Common myeloid progenitor, CD34-positive (primary cell): ENCODE measurements at regions of chr22 and their contacts with region 1.

Region 1: DNA sequence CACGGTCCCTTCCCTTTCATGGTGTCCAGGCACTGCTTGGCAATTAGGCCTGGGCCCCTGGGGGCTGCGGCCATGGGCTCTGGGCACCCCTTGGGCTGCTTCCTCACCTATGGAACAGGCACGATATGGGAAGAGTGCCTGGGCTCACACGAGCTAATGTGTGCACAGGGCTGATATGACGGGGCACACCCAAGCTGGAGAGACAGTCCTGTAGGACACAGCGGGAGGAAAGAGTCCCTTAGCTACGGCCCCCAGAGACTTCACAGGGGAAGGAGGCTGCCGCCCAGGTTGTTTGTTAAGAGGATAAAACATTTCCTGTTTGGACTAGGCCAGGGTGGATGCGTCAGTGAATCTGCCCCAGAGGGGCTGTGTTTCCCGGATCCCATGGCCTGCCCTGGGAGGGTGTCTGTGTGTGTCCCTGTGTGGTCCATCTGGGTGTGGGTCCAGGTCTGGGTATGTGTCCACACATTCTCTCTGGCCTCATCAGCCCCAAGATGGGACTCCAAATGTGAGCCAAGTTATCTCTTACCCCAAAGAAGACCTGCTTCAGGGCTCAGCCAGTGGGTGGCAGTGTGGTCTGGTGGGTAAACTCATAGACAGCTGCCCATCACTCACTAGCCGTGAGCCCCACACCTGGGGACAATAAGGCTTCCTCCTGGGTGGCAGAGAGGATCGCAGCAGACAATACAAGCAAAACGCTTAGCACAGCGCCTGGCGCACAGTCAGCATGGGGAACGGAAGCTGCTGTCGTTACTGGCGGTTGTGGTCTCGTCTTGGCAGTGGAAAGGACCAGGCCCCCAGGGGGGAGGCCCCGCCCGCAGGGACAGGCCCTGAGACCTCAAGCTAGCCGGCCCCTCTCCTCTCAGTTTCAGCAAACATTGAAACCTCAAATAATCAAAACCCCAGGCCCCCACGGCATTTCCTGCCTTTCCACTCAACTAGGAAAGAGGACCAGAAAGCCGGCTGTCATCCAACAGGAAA is 3.2 kb upstream of the EMID1 start:
- DNase-seq: peak; percentile 88 to 97 (median 96)
- H3K4me3 ChIP-seq: peak overlapping the region in 4 of 7 experiments; percentile 34 to 59 (median 44)
- H3K27ac ChIP-seq: peak overlapping the region; percentile 64 to 86
- H3K4me1 ChIP-seq: peaks cover 0 to 74% (median 70%) of the 10 kb centered on the region in 4 experiments
- H3K27me3 ChIP-seq: no peaks in the 10 kb centered on the region

Region 2: GRCh38 chr22:29167032-29167911 is 35.2 kb before region 1 on chr22:
- CTCF ChIA-PET with region 1: interaction called, 17 read pairs
- POLR2A ChIA-PET with region 1: interaction called, 11 read pairs
- DNase-seq: peak; percentile 94 to 99 (median 98)
- H3K4me3 ChIP-seq: peak overlapping the region in 3 of 7 experiments; percentile 6 to 39 (median 22)
- H3K27ac ChIP-seq: peak overlapping the region in 1 of 2 experiments; percentile 6
- H3K4me1 ChIP-seq: peaks cover 4 to 34% (median 28%) of the 10 kb centered on the region in 4 experiments
- H3K27me3 ChIP-seq: no peaks in the 10 kb centered on the region

Region 3: DNA sequence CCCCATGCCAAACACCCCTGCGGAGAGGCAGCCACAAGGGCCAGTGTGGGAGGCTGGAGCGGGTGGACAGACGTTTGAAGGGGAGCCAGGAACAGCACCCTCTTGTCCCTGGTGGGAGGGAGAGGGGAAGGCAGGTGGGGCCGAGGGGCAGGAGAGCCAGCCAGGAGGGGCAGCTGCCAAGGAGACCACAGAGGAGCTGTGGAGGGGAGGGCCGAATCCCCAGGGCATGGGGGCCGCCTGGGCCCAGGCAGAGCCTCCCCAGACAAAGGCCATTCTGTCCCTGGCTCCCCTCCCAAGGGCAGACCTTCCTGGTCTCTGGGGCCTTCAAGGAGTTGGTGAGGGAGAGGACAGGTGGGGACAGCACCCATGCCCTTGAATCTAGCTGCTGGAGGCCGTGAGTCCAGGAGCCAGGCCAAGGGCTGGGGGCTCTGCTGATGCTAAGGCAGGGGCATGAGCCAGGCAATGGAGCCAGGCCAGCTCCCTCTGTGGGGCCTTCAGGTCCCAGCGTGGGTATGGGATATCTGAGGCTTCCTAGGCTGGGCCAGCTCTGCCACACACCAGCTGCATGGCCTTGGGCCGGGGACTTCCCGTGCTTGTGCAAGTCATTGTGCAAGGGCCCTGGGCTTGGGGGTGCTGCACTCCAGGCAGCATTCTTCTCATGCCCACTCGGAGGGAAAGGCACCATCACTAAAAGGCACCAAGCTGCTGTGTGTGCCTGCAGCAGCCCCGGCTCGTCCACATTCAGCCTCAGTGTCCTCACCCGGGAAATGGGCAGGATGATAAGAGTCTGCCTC is 14.6 kb after region 1 on chr22:
- CTCF ChIA-PET with region 1: interaction called, 52 read pairs
- POLR2A ChIA-PET with region 1: interaction called, 3 read pairs
- DNase-seq: peak in 2 of 3 donors; percentile 89 to 90
- H3K4me3 ChIP-seq: no peak overlapping the region
- H3K27ac ChIP-seq: no peak overlapping the region
- H3K4me1 ChIP-seq: peaks cover 0 to 16% (median 7%) of the 10 kb centered on the region in 4 experiments
- H3K27me3 ChIP-seq: no peaks in the 10 kb centered on the region

Region 4: DNA sequence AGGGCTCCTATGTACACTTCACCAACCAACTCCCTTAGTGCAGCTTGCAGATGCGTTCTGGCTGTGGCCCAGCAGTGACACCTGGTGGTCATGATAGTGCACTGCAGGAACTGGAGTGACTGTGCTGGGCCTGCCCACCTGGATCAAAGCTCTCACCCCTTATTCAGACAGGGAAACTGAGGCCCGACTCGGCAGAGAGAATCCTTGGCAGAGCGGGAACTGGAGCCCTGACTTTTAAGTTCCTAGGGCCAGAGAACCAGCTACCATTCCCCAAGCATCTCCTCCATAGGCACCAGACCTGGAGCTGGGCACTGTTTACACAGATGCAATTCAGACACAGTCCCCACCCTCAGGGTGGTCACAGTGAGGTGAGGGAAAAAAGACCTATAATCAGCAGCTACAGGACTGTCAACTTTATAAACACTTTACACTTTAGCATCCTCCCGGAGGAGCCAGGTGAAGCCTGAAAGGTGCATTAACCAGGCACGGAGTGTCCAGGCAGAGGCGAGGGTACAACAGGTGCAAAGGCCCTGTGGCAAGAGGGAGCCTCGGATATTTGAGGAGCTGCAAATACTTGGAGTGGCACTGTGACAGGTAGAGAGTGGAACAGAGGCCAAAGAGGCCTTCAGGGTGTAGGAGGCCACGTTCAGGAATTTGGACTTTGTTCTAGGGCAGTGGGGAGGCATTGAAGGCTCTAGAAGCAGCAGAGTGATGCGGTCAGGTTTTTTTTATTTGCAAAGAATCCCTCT is 43.3 kb after region 1 on chr22:
- CTCF ChIA-PET with region 1: interaction called, 49 read pairs
- POLR2A ChIA-PET with region 1: interaction called, 6 read pairs
- DNase-seq: peak; percentile 67 to 81 (median 79)
- H3K4me3 ChIP-seq: no peak overlapping the region
- H3K27ac ChIP-seq: no peak overlapping the region
- H3K4me1 ChIP-seq: peaks cover 0 to 9% (median 5%) of the 10 kb centered on the region in 4 experiments
- H3K27me3 ChIP-seq: no peaks in the 10 kb centered on the region